ENCODE measurements at regions of chr9 and their contacts with region 1.

Region 1: DNA sequence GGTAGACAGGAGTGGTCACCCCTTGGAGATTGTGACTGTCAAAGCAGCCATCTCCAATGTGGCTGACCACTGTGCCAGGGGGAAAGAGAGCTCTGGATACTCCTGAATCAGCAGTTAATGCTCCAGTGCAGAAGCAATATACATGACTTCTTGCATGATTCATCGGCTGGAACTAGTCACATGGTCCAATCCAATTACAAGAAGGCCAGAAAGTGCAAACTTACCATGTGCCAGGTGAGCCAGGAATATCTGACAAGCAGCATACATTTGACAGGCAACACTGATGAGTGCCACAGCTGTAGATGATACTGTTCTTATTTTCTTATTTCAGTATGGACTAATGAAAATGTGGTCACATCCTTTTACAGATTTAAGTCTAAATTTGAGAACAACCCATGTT is 440.0 kb upstream of the MPDZ start:
- DNase-seq: no peak
- H3K4me3 ChIP-seq: no peak overlapping the region
- H3K27ac ChIP-seq: no peak overlapping the region
- H3K27me3 ChIP-seq: no peaks in the 10 kb centered on the region
- CTCF ChIP-seq: no peak

Region 2: GRCh38 chr9:14512942-14513341 is 793.5 kb after region 1 on chr9:
- CTCF ChIA-PET with region 1: interaction called, 10 read pairs
- POLR2A ChIA-PET with region 1: no interaction called
- DNase-seq: no peak
- H3K4me3 ChIP-seq: no peak overlapping the region
- H3K27ac ChIP-seq: no peak overlapping the region
- H3K27me3 ChIP-seq: no peaks in the 10 kb centered on the region
- CTCF ChIP-seq: no peak

Measured in AG04450 (cell line).